ENCODE measurements at regions of chr9 and their contacts with region 1.

Region 1: DNA sequence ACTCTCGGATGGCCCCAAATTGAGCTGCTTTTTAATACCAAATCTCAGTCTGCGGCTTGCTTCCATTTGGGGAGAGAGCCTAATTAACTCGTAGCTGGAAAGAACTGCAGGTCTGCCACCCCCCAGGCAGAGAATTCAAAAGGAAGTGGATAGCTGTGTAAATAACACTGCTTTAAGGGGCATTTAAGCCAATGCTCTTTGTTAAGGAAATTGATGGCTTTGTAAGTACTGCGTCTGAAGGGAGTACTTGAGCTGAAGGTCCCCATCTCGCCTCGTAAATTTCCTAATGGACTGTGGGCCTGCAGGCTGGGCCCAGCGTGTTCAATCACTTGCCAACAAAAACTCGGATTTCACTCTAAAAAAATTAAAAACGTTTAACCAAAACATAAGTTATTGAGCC is 132.7 kb downstream of the PAPPA start:
- DNase-seq: peak; percentile 68 to 73
- H3K4me3 ChIP-seq: peak overlapping the region in 1 of 4 experiments; percentile 42; a peak in 4 of 8 replicates
- H3K27ac ChIP-seq: no peak overlapping the region
- H3K4me1 ChIP-seq: peaks cover 2 to 27% (median 16%) of the 10 kb centered on the region in 4 experiments; a peak in 6 of 7 replicates
- H3K27me3 ChIP-seq: peaks cover 4 to 46% (median 35%) of the 10 kb centered on the region in 4 experiments
- CTCF ChIP-seq: no peak
- EP300 ChIP-seq: peak in 1 of 2 experiments; percentile 95; a peak in 1 of 3 replicates
- POLR2A ChIP-seq: no peak
- RAD21 ChIP-seq: peak in 1 of 2 experiments; percentile 8; a peak in 1 of 4 replicates

Region 2: DNA sequence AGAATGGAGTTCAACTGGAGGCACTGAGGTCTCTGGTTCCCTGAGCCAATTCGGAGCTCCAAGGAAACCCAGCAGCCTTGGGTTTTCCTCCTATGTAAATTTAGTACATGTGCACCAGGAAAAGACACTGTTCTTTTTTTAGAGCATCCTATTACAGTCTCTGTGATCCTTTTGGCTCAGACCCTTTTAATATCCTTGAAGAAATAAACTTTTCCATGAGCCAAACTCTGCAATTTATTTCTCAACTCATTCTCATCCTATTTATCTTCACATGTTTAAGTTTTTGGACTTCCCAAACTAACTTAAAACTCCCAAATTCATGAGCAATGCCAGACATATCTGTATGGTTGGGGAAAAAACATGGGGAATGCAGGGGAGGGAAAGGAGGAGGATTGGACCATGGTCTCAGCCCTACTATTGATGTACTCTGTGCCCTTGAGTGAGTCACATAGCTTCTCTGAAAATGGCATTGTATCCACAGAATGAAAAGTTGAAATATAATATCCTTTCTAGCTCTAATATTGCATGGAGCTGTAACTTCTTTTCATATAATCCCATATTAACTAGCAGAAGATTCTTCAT is 56.2 kb before region 1 on chr9:
- CTCF ChIA-PET with region 1: no interaction called
- POLR2A ChIA-PET with region 1: no interaction called
- DNase-seq: no peak
- H3K4me3 ChIP-seq: no peak overlapping the region
- H3K27ac ChIP-seq: no peak overlapping the region
- H3K4me1 ChIP-seq: no peaks in the 10 kb centered on the region
- H3K27me3 ChIP-seq: no peaks in the 10 kb centered on the region
- CTCF ChIP-seq: no peak
- EP300 ChIP-seq: no peak
- POLR2A ChIP-seq: no peak
- RAD21 ChIP-seq: no peak

Region 3: DNA sequence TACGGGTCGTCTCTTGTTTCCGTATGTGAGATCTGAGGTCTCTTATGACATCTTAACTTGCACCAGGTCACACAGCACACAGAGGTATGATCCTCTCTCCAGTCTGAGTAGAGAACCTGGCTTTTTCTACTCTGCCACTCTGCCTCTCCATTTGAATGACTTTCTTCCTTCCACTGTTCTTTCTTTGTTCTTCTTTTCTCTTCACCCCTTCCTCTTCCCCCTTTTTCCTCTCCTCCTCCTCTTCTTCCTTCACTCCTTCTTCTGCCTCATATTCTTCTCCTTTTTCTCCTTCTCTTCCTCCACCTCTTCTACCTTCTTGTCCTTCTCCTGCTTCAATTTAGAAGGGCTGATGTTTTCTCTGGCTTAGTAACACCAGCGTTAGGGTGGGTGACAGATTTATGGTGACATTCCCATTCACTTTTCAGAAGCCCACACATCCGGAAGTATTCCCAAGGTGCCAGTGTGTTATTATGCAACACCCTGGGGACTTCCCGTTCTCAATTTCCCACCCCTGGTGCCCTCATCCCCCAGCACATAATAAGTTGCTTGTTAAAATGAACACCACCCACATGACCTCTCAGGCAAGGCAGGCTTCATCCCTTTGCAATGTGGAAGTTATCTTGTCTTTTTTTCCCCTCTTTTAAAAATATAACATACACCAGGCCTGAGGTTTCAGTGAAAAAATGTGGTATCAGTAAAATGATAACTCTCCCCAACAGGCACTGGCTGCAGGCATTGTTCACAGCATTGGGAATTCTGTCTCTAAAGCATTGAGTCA is 10.7 kb before region 1 on chr9:
- CTCF ChIA-PET with region 1: interaction called, 13 read pairs
- POLR2A ChIA-PET with region 1: interaction called, 7 read pairs
- DNase-seq: no peak
- H3K4me3 ChIP-seq: no peak overlapping the region
- H3K27ac ChIP-seq: no peak overlapping the region
- H3K4me1 ChIP-seq: peaks cover 14 to 38% (median 21%) of the 10 kb centered on the region in 4 experiments; a peak in 5 of 7 replicates
- H3K27me3 ChIP-seq: peaks cover 27 to 65% (median 56%) of the 10 kb centered on the region in 4 experiments
- CTCF ChIP-seq: no peak
- EP300 ChIP-seq: no peak
- POLR2A ChIP-seq: no peak
- RAD21 ChIP-seq: no peak

Region 4: GRCh38 chr9:116304761-116305160 is 18.5 kb after region 1 on chr9:
- CTCF ChIA-PET with region 1: interaction called, 5 read pairs
- POLR2A ChIA-PET with region 1: interaction called, 10 read pairs
- DNase-seq: no peak
- H3K4me3 ChIP-seq: no peak overlapping the region
- H3K27ac ChIP-seq: no peak overlapping the region
- H3K4me1 ChIP-seq: peaks cover 0 to 12% (median 10%) of the 10 kb centered on the region in 4 experiments; a peak in 5 of 7 replicates
- H3K27me3 ChIP-seq: peaks cover 0 to 2% (median 0%) of the 10 kb centered on the region in 4 experiments; a peak in 2 of 7 replicates
- CTCF ChIP-seq: no peak
- EP300 ChIP-seq: no peak
- POLR2A ChIP-seq: no peak
- RAD21 ChIP-seq: no peak

Region 5: GRCh38 chr9:116365056-116365471 is 78.8 kb after region 1 on chr9:
- CTCF ChIA-PET with region 1: no interaction called
- POLR2A ChIA-PET with region 1: no interaction called
- DNase-seq: no peak
- H3K4me3 ChIP-seq: no peak overlapping the region
- H3K27ac ChIP-seq: no peak overlapping the region
- H3K4me1 ChIP-seq: peaks cover 0 to 3% (median 1%) of the 10 kb centered on the region in 4 experiments; a peak in 3 of 7 replicates
- H3K27me3 ChIP-seq: no peaks in the 10 kb centered on the region
- CTCF ChIP-seq: no peak
- EP300 ChIP-seq: no peak
- POLR2A ChIP-seq: no peak
- RAD21 ChIP-seq: no peak

Region 6: DNA sequence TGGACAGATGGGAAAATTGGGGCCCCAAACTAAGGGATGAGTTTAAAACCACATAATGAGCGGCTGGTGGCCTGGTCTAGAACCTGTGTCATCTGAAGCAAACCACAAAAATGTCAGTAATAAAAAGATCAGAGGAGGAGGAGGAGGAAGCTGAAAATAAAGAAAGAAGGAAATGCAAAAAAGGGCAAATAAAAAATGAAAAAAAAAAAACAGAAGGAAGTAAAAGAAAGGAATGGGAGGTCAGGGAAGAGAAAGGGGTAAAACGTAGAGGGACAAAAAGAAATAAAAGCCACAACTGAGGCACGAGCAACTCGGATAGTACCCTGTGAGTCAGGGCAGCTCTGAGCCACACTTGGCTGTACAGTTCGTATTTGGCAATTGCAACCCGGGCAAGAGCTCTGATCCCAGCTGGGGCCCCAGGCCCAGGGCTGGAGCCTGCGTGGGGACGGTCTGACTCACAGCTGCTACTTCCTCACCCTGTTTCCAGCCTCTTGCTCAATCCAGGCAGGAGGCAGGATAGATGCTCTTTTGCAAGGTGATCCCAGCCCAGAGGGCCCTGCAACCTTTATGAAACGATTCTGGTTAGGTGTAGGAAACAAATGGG is 262.9 kb after region 1 on chr9:
- CTCF ChIA-PET with region 1: no interaction called
- POLR2A ChIA-PET with region 1: no interaction called
- DNase-seq: no peak
- H3K4me3 ChIP-seq: no peak overlapping the region
- H3K27ac ChIP-seq: no peak overlapping the region
- H3K4me1 ChIP-seq: 0 out of 7 replicates have a peak, but pooled peaks cover 0 to 2% (median 0%) of the 10 kb centered on the region in 4 experiments
- H3K27me3 ChIP-seq: no peaks in the 10 kb centered on the region
- CTCF ChIP-seq: no peak
- EP300 ChIP-seq: no peak
- POLR2A ChIP-seq: no peak
- RAD21 ChIP-seq: no peak

Region 7: GRCh38 chr9:116572095-116572748 is 285.9 kb after region 1 on chr9:
- CTCF ChIA-PET with region 1: interaction called, 11 read pairs
- POLR2A ChIA-PET with region 1: no interaction called
- DNase-seq: peak; percentile 46 to 91
- H3K4me3 ChIP-seq: no peak overlapping the region
- H3K27ac ChIP-seq: no peak overlapping the region
- H3K4me1 ChIP-seq: peaks cover 0 to 3% (median under 1%) of the 10 kb centered on the region in 4 experiments; a peak in 3 of 7 replicates
- H3K27me3 ChIP-seq: no peaks in the 10 kb centered on the region
- CTCF ChIP-seq: peak; percentile 92 to 96 (median 95)
- EP300 ChIP-seq: no peak
- POLR2A ChIP-seq: no peak
- RAD21 ChIP-seq: peak; percentile 99 to 100